Left cardiac atrium (tissue), 4 donors: ENCODE measurements at regions of chr12 and their contacts with region 1.

Region 1: DNA sequence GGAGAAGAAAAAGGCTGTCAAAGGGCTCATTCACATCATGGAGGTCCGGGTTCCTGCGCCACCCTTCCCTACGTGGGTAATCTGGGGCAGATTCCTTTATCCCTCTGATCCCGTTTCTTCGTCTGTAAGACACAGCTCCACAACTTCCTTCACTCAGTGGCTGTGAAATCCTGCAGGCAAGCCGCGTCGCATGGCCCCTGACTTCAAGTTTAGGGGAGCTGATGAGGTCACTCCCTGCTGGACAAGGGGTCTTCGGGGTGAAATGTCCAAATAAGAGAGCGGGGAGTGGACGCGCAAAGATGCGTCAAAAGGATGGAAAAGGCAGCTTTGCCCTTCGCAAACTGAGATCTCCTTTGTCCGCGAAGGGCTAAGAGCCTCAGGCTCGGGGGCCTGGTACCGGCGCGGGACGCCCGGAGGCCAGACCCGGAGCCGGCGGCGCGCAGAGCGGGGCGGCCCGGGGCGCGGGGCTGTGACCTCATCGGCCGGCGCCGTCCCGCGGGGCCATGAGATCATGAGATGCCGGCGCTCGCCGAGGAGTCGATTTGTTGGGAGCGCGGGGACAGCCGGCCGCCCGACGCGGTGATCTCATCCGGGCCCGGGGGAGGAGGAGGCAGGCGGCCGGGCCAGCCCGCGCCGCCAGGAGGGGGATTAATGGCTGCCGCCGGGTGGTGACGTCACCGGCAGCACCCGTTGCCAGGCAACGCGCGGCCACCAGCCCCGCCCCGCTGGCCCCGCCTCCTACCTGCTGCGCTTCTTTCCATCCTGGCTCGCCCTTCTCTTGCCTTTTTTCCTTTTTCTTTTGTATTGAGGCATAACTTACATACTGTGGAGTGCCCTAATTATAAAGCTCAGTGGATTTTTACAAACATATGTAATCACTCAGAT is 62.1 kb downstream of the HRK start:
- DNase-seq: peak; percentile 93
- ATAC-seq: peak; percentile 98

Region 2: GRCh38 chr12:116737774-116738700 is 81.2 kb before region 1 on chr12 and contains the starts of genes RNFT2 and SPRING1:
- intact Hi-C with region 1: loop called in 1 of 2 experiments (anchors 2 kb)
- DNase-seq: peak; percentile 99
- ATAC-seq: peak; percentile 100
- total RNA-seq, gene RNFT2: 1.6 to 3.1 TPM
- total RNA-seq, gene SPRING1: 10.7 to 15.8 TPM

Region 3: GRCh38 chr12:117076410-117077372 is 257.5 kb after region 1 on chr12:
- intact Hi-C with region 1: no loop called
- DNase-seq: no peak
- ATAC-seq: peak; percentile 44 to 64